Tibial artery (tissue), 4 donors: ENCODE measurements at regions of chr4 and their contacts with region 1.

Region 1: DNA sequence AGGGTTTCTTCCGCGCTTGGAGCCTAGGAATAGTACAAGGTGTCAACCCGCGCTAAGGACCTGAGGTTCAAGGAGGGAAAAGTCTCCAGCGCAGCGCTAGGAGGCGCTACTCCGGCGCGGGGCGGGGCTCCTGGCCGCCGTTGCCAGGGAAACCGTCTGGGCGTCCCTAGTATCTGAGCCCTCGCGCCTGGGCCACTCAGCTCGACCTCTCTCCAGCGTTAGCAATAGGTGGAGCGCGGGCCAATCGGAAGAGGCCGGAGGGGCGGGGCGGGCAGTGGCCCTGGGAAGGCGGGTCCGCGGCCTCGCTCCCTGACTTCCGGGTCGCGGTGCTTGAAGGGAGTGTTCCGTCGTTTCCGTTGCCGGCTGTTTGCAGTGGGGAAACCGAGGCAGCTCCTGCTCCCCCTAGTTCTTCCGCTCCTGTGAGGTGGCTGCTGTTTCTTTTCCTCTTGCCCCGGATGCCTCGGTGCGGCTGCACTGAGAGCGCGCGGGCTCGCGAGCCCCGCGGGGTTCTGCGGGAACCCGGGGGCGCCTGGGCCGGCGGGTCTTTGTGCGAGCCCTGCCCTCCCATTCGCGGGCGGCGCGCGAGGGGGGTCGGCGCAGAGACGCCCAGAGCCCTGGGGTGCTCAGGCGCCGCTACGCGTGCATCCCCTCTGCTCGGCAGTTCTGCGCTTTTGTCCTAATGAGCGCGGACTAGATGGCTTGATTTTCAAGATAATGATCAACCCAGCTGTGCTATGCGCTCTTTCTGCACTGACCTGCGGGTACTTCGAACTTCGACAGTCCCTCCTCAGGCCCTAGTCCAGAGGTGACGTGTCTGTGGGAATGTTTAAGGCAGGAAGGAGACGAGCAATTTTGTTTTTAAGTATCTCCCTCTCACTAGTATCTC is at the start of gene ELMOD2:
- DNase-seq: peak; percentile 99
- H3K4me3 ChIP-seq: peak within 1 kb of the TSS; percentile 98 to 99
- H3K27ac ChIP-seq: peak within 1 kb of the TSS; percentile 79 to 91
- H3K4me1 ChIP-seq: peaks cover 0 to 17% (median 9%) of the 10 kb centered on the region in 4 donors
- H3K27me3 ChIP-seq: no peaks in the 10 kb centered on the region
- CTCF ChIP-seq: peak; percentile 89 to 92

Region 2: GRCh38 chr4:140373328-140374129 is 150.6 kb before region 1 on chr4 and contains the start of gene SCOC:
- intact Hi-C with region 1: loop called (anchors 10 kb)
- DNase-seq: peak; percentile 100
- H3K4me3 ChIP-seq: peak within 1 kb of the TSS; percentile 96 to 98
- H3K27ac ChIP-seq: peak within 1 kb of the TSS; percentile 93 to 98
- H3K4me1 ChIP-seq: peaks cover 0 to 38% (median 24%) of the 10 kb centered on the region in 4 donors
- H3K27me3 ChIP-seq: no peaks in the 10 kb centered on the region
- CTCF ChIP-seq: no peak

Region 3: GRCh38 chr4:140469791-140470733 is 54.0 kb before region 1 on chr4:
- intact Hi-C with region 1: no loop called
- DNase-seq: no peak
- H3K4me3 ChIP-seq: no peak overlapping the region
- H3K27ac ChIP-seq: no peak overlapping the region
- H3K4me1 ChIP-seq: no peaks in the 10 kb centered on the region
- H3K27me3 ChIP-seq: peaks cover 0 to 5% of the 10 kb centered on the region in 2 donors
- CTCF ChIP-seq: no peak

Region 4: GRCh38 chr4:140568507-140569306 is 44.6 kb after region 1 on chr4 and contains the start of gene UCP1:
- intact Hi-C with region 1: loop called (anchors 1 kb)
- DNase-seq: peak in 1 of 2 donors; percentile 65
- H3K4me3 ChIP-seq: peak within 1 kb of the TSS; percentile 44 to 56
- H3K27ac ChIP-seq: no peak within 1 kb of the TSS
- H3K4me1 ChIP-seq: peaks cover 0 to 20% (median 16%) of the 10 kb centered on the region in 4 donors
- H3K27me3 ChIP-seq: peaks cover 0 to 39% of the 10 kb centered on the region in 2 donors
- CTCF ChIP-seq: no peak

Region 5: DNA sequence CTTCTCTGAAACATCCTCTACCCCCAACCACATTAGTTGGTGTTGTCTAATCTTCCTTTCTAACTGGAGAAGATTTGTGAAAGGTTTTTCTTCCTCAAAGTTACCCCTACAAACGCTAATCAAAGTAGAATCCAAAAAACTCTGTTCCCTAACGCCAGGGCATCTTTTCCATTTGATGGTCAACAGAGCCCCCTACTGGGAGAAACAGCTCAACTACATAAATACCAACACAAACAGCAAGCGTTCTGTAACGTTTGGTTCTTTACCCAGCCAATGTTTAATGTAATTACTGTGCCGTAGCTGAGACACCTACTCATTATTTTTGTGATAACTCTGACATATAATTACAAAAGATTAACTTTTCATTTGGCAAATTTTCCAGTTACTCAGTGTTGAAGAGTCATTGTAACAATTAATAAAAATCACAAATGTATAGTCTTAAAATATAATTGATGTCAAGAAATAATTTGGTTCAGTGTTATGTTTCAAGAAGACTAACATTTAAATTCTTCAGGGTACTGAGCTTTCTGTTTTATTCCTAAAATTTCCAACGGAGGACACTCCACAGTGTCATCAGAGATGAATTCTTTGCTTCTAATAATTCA is 327.0 kb after region 1 on chr4:
- intact Hi-C with region 1: loop called (anchors 10 kb)
- DNase-seq: peak in 1 of 2 donors; percentile 30
- H3K4me3 ChIP-seq: no peak overlapping the region
- H3K27ac ChIP-seq: no peak overlapping the region
- H3K4me1 ChIP-seq: peaks cover 0 to 6% (median 0%) of the 10 kb centered on the region in 4 donors
- H3K27me3 ChIP-seq: peaks cover 0 to 8% of the 10 kb centered on the region in 2 donors
- CTCF ChIP-seq: peak; percentile 72 to 88